ENCODE measurements at regions of chr14 and their contacts with region 1.

Region 1: GRCh38 chr14:54509546-54510501 is at the start of gene CGRRF1:
- DNase-seq: peak; percentile 98 to 99 (median 99)
- H3K4me3 ChIP-seq: peak within 1 kb of the TSS; percentile 58 to 100 (median 97)
- H3K27ac ChIP-seq: peak within 1 kb of the TSS; percentile 36 to 98 (median 85)
- H3K27me3 ChIP-seq: no peaks in the 10 kb centered on the region
- CTCF ChIP-seq: peak; percentile 80 to 99 (median 95)
- total RNA-seq, gene CGRRF1: 18.9 to 43.4 (median 28.9) TPM

Region 2: GRCh38 chr14:54098536-54098935 is 411.3 kb before region 1 on chr14:
- intact Hi-C with region 1: no loop called
- DNase-seq: no peak
- H3K4me3 ChIP-seq: no peak overlapping the region
- H3K27ac ChIP-seq: no peak overlapping the region
- H3K27me3 ChIP-seq: no peaks in the 10 kb centered on the region
- CTCF ChIP-seq: no peak

Region 3: GRCh38 chr14:54377501-54377900 is 132.3 kb before region 1 on chr14:
- intact Hi-C with region 1: no loop called
- DNase-seq: no peak
- H3K4me3 ChIP-seq: no peak overlapping the region
- H3K27ac ChIP-seq: no peak overlapping the region
- H3K27me3 ChIP-seq: no peaks in the 10 kb centered on the region
- CTCF ChIP-seq: no peak

Region 4: DNA sequence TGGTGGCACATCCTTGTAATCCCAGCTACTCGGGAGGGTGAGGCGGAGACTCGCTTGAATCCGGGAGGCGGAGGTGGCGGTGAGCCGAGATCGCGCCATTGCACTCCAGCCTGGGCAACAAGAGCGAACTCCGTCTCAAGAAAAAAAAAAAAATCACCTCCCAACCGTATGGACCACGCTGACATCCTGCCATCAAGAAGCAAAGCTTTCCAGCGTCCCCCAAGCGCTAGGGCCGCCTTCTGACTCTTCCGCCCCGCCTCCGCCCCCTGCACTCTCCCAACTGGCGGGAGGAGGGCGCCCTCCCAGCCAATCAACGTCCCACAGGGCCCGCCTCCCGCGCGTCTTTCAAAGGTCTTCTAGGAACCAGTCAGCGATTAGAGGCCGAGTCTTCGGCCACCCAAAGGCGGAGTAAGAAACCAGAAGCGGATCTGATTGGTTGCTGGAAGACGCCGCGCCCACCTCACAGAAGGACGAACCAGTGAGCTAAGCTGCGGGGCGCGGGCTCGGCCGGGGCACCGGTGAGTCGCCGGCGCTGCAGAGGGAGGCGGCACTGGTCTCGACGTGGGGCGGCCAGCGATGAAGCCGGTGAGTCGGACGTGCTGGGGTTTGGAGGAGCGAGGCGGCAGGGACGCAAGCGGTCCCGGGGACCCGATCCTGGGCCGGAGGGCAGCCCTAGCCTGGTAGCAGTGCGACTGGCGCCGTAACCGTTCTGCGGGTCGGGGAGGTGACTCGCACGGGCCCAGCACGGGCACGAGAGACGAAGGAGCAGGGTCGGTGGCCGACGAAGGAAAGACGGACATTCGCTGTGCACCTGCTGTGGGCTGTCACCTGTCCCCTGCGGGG is 113.1 kb before region 1 on chr14 and contains the start of gene CDKN3:
- intact Hi-C with region 1: loop called in 1 of 2 experiments (anchors 10 kb)
- DNase-seq: peak; percentile 90 to 99 (median 98)
- H3K4me3 ChIP-seq: peak within 1 kb of the TSS; percentile 62 to 98 (median 85)
- H3K27ac ChIP-seq: peak within 1 kb of the TSS in 10 of 59 donors; percentile 4 to 72 (median 58)
- H3K27me3 ChIP-seq: no peaks in the 10 kb centered on the region
- CTCF ChIP-seq: peak; percentile 25 to 88 (median 72)
- total RNA-seq, gene CDKN3: 0.73 to 10.0 (median 3.9) TPM

Region 5: GRCh38 chr14:54440873-54441868 is 68.7 kb before region 1 on chr14 and contains the start of gene CNIH1:
- intact Hi-C with region 1: loop called in 1 of 2 experiments (anchors 2 kb)
- DNase-seq: peak; percentile 81 to 93 (median 89)
- H3K4me3 ChIP-seq: peak within 1 kb of the TSS; percentile 47 to 93 (median 75)
- H3K27ac ChIP-seq: peak within 1 kb of the TSS; percentile 53 to 97 (median 90)
- H3K27me3 ChIP-seq: no peaks in the 10 kb centered on the region
- CTCF ChIP-seq: peak; percentile 92 to 100 (median 99)
- total RNA-seq, gene CNIH1: 43.6 to 104 (median 72.6) TPM

Region 6: DNA sequence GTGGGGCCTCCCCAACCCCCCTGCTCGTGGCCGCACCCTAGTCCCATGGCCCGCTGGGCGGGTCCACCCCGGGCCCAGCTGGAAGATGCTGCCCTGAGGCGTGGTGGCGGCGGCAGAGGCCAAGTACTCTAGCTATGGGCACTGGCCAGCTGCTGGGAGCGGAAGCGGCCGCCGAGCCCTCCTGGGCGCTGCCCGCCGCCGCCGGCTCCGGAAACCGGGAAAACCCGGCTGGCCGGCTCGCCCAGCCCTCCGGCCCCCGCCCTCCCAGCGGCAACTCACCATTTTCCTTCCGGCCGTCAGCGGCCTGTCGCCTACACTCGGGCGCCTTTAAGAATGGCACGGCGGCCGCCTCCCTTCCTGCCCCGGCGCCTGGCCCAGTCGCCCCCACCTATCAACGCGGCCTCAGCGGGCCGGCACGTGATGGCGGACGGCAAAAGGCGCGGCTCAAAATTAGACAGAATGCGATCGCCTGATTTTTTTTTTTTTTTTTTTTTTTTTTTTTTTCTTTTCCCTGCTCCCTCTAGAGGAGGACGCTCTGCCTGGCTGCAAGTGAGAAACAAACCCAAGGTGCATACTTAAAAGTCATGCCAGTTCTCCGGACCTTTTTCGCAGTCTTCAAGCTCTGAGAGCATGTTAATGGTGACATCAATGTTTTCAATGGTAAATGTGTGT is 21.0 kb before region 1 on chr14 and contains the start of gene GMFB:
- intact Hi-C with region 1: loop called (anchors 1 kb)
- DNase-seq: peak; percentile 82 to 90 (median 86)
- H3K4me3 ChIP-seq: peak within 1 kb of the TSS; percentile 62 to 100 (median 95)
- H3K27ac ChIP-seq: peak within 1 kb of the TSS; percentile 24 to 98 (median 93)
- H3K27me3 ChIP-seq: no peaks in the 10 kb centered on the region
- CTCF ChIP-seq: peak in 55 of 56 donors; percentile 35 to 85 (median 66)
- total RNA-seq, gene GMFB: 78.7 to 157 (median 110) TPM

Region 7: GRCh38 chr14:54691525-54692283 is 181.9 kb after region 1 on chr14:
- intact Hi-C with region 1: loop called in 1 of 2 experiments (anchors 10 kb)
- DNase-seq: peak; percentile 33 to 84 (median 68)
- H3K4me3 ChIP-seq: no peak overlapping the region
- H3K27ac ChIP-seq: peak overlapping the region in 3 of 59 donors; percentile 15 to 33 (median 19)
- H3K27me3 ChIP-seq: no peaks in the 10 kb centered on the region
- CTCF ChIP-seq: peak; percentile 57 to 91 (median 81)

Region 8: DNA sequence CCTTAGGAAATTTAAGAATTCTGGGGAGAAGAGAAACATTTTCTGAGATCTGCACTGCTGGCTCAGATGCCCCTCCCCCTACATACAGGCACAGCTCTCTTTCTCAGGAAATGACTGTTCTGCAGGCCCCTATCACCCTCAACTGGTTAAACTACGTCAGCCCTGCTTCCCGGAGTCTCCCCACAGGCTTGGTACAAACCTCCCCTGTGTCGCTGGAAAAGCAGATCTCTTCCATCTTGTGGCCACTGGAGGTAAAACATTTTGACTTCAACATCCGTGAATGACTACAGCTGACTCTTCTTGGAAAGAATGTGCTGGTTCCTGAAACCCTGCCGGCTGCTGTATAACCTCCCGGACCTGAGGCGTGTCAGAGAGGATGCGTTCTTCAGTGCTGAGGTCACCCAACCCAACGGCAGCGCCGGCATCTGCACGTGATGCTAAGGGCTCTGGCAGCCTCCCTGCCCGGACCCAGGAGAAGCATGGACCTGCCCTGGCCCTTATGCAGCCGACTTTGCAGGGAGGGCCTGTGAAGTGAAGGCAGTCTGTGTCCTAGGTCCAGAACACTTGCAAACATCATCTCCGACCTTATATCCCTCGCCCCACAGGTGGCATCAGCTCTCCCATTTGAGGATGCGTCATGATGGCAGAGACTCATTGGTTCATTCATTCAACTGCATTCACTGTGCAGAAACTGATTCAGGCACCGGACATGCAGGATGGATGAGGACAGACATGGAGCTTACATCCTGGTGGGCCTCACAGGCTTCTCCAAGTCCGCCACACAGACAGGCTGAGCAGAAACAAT is 263.5 kb after region 1 on chr14:
- intact Hi-C with region 1: loop called in 1 of 2 experiments (anchors 5 kb)
- DNase-seq: peak in 6 of 10 donors; percentile 56 to 78 (median 66)
- H3K4me3 ChIP-seq: peak overlapping the region in 38 of 59 donors; percentile 2 to 57 (median 28)
- H3K27ac ChIP-seq: peak overlapping the region in 56 of 59 donors; percentile 13 to 86 (median 64)
- H3K27me3 ChIP-seq: no peaks in the 10 kb centered on the region
- CTCF ChIP-seq: peak; percentile 36 to 71 (median 58)

Measured in dorsolateral prefrontal cortex (tissue), 120 donors.